ENCODE measurements at regions of chr3 and their contacts with region 1.

Region 1: DNA sequence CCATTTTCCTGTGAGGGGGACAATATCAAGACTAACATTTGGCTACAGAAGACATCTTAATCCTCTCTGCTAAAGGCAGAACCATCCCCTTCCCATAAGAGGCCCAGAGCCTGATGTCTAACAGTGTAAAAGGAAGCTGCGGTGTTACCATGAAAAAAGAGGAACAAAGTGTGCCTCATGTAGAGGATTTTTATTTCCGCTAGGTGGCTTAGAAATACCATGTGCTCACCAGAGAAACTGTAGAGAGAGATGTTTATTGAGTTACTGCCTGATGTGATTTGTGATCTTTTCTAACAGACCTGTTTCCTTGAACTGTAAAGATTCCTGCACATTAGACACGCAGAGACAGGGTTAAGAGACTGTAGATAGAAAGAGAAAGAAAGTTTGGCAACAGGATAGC is 22.0 kb downstream of the OR5H15 start:
- DNase-seq: peak in 2 of 9 experiments; percentile 0 to 14
- ATAC-seq: no peak
- H3K4me3 ChIP-seq: no peak overlapping the region
- H3K4me3 Mint-ChIP-seq: no peak overlapping the region
- H3K27ac ChIP-seq: no peak overlapping the region
- H3K27ac Mint-ChIP-seq: no peak overlapping the region
- H3K4me1 ChIP-seq: no peaks in the 10 kb centered on the region
- H3K4me1 Mint-ChIP-seq: no peaks in the 10 kb centered on the region
- H3K27me3 ChIP-seq: no peaks in the 10 kb centered on the region
- H3K27me3 Mint-ChIP-seq: peaks cover 7% of the 10 kb centered on the region
- CTCF ChIP-seq: no peak

Region 2: DNA sequence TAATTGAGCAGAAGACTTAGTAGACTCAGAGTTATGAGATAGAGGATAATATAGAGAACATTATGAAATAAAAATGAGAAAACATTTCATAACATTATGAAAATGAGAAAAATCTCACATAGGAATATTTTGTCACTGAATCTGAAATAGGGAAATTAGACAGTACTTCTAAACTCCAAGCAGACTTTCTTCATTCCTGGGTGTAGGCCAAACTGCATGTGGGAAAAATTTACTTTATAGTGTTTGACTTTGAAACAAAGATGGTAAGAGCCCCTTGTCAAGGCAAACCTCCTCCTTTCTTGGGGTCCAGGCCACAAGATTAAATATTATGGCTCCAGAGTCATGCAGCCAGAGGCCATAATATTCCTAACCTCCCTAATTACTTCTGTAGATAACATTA is 48.0 kb before region 1 on chr3:
- CTCF ChIA-PET with region 1: no interaction called
- POLR2A ChIA-PET with region 1: no interaction called
- intact Hi-C with region 1: loop called (anchors 1 to 2 kb)
- DNase-seq: no peak
- ATAC-seq: no peak
- H3K4me3 ChIP-seq: no peak overlapping the region
- H3K4me3 Mint-ChIP-seq: no peak overlapping the region
- H3K27ac ChIP-seq: no peak overlapping the region
- H3K27ac Mint-ChIP-seq: no peak overlapping the region
- H3K4me1 ChIP-seq: no peaks in the 10 kb centered on the region
- H3K4me1 Mint-ChIP-seq: no peaks in the 10 kb centered on the region
- H3K27me3 ChIP-seq: no peaks in the 10 kb centered on the region
- H3K27me3 Mint-ChIP-seq: peaks cover 4% of the 10 kb centered on the region
- CTCF ChIP-seq: no peak

Region 3: GRCh38 chr3:98199020-98199419 is 10.5 kb after region 1 on chr3:
- CTCF ChIA-PET with region 1: no interaction called
- POLR2A ChIA-PET with region 1: no interaction called
- intact Hi-C with region 1: no loop called
- DNase-seq: no peak
- ATAC-seq: no peak
- H3K4me3 ChIP-seq: no peak overlapping the region
- H3K4me3 Mint-ChIP-seq: no peak overlapping the region
- H3K27ac ChIP-seq: no peak overlapping the region
- H3K27ac Mint-ChIP-seq: no peak overlapping the region
- H3K4me1 ChIP-seq: no peaks in the 10 kb centered on the region
- H3K4me1 Mint-ChIP-seq: no peaks in the 10 kb centered on the region
- H3K27me3 ChIP-seq: no peaks in the 10 kb centered on the region
- H3K27me3 Mint-ChIP-seq: peaks cover 8% of the 10 kb centered on the region
- CTCF ChIP-seq: no peak

Region 4: GRCh38 chr3:98329392-98330124 is 141.0 kb after region 1 on chr3:
- CTCF ChIA-PET with region 1: no interaction called
- POLR2A ChIA-PET with region 1: no interaction called
- intact Hi-C with region 1: loop called in 1 of 2 experiments (anchors 5 kb)
- DNase-seq: peak in 7 of 9 experiments; percentile 10 to 62 (median 37)
- ATAC-seq: peak; percentile 74
- H3K4me3 ChIP-seq: no peak overlapping the region
- H3K4me3 Mint-ChIP-seq: no peak overlapping the region
- H3K27ac ChIP-seq: no peak overlapping the region
- H3K27ac Mint-ChIP-seq: no peak overlapping the region
- H3K4me1 ChIP-seq: no peaks in the 10 kb centered on the region
- H3K4me1 Mint-ChIP-seq: peaks cover 3% of the 10 kb centered on the region
- H3K27me3 ChIP-seq: no peaks in the 10 kb centered on the region
- H3K27me3 Mint-ChIP-seq: peaks cover 21% of the 10 kb centered on the region
- CTCF ChIP-seq: peak; percentile 66

Region 5: GRCh38 chr3:98581474-98581873 is 392.9 kb after region 1 on chr3:
- CTCF ChIA-PET with region 1: no interaction called
- POLR2A ChIA-PET with region 1: no interaction called
- intact Hi-C with region 1: loop called in 1 of 2 experiments (anchors 5 kb)
- DNase-seq: no peak
- ATAC-seq: no peak
- H3K4me3 ChIP-seq: no peak overlapping the region
- H3K4me3 Mint-ChIP-seq: no peak overlapping the region
- H3K27ac ChIP-seq: no peak overlapping the region
- H3K27ac Mint-ChIP-seq: peak overlapping the region; percentile 67
- H3K4me1 ChIP-seq: no peaks in the 10 kb centered on the region
- H3K4me1 Mint-ChIP-seq: peaks cover 19% of the 10 kb centered on the region
- H3K27me3 ChIP-seq: no peaks in the 10 kb centered on the region
- H3K27me3 Mint-ChIP-seq: no peaks in the 10 kb centered on the region
- CTCF ChIP-seq: no peak

Measured in CD8-positive, alpha-beta T cell (primary cell).